ENCODE measurements at regions of chr3 and their contacts with region 1.

Region 1: DNA sequence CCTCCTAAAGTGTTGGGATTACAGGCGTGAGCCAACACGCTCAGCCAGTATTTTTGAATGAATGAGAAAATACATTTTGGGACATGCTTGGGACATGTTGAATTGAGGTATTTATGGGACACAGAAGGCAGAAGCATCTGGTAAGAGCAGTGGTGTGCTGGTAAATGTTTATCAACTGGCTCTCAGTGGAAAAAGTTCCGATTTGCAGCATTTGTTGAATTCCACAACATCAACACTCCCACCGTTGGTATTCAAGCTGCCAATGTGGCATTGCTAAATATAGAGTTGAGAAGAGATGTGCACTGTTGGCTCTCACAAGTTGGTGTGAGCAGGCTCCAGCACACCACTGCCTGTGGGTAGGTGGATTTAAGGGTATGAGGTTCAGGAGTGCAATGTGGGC is 35.8 kb upstream of the LRRFIP2 start:
- DNase-seq: no peak
- H3K4me3 Mint-ChIP-seq: no peak overlapping the region
- H3K27ac Mint-ChIP-seq: no peak overlapping the region
- H3K4me1 Mint-ChIP-seq: peaks cover 2% of the 10 kb centered on the region
- H3K27me3 Mint-ChIP-seq: no peaks in the 10 kb centered on the region

Region 2: GRCh38 chr3:36729204-36730056 is 480.8 kb before region 1 on chr3:
- CTCF ChIA-PET with region 1: interaction called, 3 read pairs
- intact Hi-C with region 1: loop called (anchors 1 kb)
- DNase-seq: no peak
- H3K4me3 Mint-ChIP-seq: no peak overlapping the region
- H3K27ac Mint-ChIP-seq: no peak overlapping the region
- H3K4me1 Mint-ChIP-seq: no peaks in the 10 kb centered on the region
- H3K27me3 Mint-ChIP-seq: peaks cover 7% of the 10 kb centered on the region

Region 3: GRCh38 chr3:37024092-37024491 is 186.1 kb before region 1 on chr3:
- CTCF ChIA-PET with region 1: interaction called, 14 read pairs
- intact Hi-C with region 1: loop called (anchors 1 kb)
- DNase-seq: no peak
- H3K4me3 Mint-ChIP-seq: no peak overlapping the region
- H3K27ac Mint-ChIP-seq: no peak overlapping the region
- H3K4me1 Mint-ChIP-seq: peaks cover 5% of the 10 kb centered on the region
- H3K27me3 Mint-ChIP-seq: no peaks in the 10 kb centered on the region

Region 4: GRCh38 chr3:37163262-37164015 is 46.8 kb before region 1 on chr3:
- CTCF ChIA-PET with region 1: no interaction called
- intact Hi-C with region 1: loop called (anchors 1 kb)
- DNase-seq: peak; percentile 49
- H3K4me3 Mint-ChIP-seq: no peak overlapping the region
- H3K27ac Mint-ChIP-seq: no peak overlapping the region
- H3K4me1 Mint-ChIP-seq: peaks cover 30% of the 10 kb centered on the region
- H3K27me3 Mint-ChIP-seq: no peaks in the 10 kb centered on the region

Region 5: GRCh38 chr3:37243820-37244748 is 33.9 kb after region 1 on chr3:
- CTCF ChIA-PET with region 1: interaction called, 4 read pairs
- intact Hi-C with region 1: loop called (anchors 2 kb)
- DNase-seq: peak; percentile 50
- H3K4me3 Mint-ChIP-seq: peak overlapping the region; percentile 90
- H3K27ac Mint-ChIP-seq: peak overlapping the region; percentile 93
- H3K4me1 Mint-ChIP-seq: peaks cover 44% of the 10 kb centered on the region
- H3K27me3 Mint-ChIP-seq: no peaks in the 10 kb centered on the region